Activated T-helper 2 cell treated with anti-CD3 and anti-CD28 coated beads, Interferon-gamma antibody, Interleukin-2, Interleukin-4, amounts not matched to agents 10 μg/mL and 5 μg/mL and 100 μg/mL, durations not matched to agents 14 hours and 24 hours and 36 hours (primary cell): ENCODE measurements at regions of chr6 and their contacts with region 1.

Region 1: DNA sequence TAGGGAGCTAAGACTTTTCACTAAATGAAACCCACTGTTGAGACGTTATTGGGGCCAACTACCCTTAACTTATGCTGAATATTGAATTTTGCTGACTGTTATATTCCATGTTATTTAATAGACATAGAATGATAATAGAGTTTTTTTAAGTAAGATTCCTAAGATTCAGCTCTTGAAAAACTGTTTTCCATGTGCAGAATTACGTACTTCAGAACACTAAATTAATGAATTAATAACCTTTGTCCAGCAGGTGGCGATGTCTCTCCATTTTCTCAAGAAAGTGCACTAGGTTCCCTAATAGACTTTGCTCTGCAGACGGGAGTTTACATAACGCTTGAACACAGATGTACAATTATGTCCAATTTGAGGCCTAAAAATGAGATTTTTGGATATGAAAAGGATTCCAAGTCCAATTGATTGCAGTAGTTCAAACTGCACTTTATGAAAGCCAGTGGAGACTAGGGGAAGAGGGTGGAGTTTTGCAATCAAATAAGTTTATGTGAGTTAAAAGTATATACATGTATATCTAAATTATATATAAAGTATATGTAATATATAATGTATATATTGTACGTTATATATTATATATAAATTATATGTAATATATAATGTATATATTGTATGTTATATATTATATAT is 282.1 kb downstream of the UST start:
- DNase-seq: peak; percentile 55
- H3K4me3 Mint-ChIP-seq: no peak overlapping the region
- H3K27ac Mint-ChIP-seq: peak overlapping the region; percentile 75
- H3K4me1 Mint-ChIP-seq: peaks cover 44% of the 10 kb centered on the region
- H3K27me3 Mint-ChIP-seq: no peaks in the 10 kb centered on the region

Region 2: GRCh38 chr6:148999929-149000468 is 28.9 kb before region 1 on chr6:
- intact Hi-C with region 1: no loop called
- DNase-seq: no peak
- H3K4me3 Mint-ChIP-seq: peak overlapping the region; percentile 7
- H3K27ac Mint-ChIP-seq: peak overlapping the region; percentile 6
- H3K4me1 Mint-ChIP-seq: peaks cover 14% of the 10 kb centered on the region
- H3K27me3 Mint-ChIP-seq: peaks cover 9% of the 10 kb centered on the region

Region 3: DNA sequence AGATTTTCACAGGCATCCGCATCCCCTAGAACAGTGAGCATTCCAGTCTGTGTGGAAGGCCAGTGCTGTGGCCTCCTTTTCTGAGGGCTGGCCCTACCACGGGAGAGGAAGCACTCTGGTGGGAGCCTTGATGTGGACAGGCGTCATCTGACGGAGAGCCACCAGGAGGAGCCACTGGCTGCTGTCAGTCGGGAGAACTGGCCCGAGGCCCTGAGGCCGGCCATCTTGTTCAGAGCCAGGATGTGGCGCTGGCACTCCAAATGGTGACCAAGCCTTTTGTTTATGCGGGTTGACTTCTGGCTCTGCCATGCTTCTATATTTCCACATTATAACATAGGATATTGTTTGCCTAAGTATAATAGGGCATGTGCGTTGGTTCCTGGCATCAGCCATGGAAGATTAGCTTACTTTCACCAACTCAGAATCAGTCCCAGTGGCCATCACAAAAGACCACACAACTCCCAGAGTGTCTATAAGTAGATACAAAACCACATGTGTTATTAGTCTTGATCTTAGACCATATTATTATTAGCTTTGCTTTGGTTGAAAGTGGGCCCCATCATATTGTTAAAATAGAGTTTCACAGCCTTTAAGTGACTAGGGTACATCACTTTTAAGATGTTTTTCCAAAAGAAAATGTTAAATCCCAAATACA is 14.7 kb after region 1 on chr6:
- intact Hi-C with region 1: no loop called
- DNase-seq: no peak
- H3K4me3 Mint-ChIP-seq: no peak overlapping the region
- H3K27ac Mint-ChIP-seq: no peak overlapping the region
- H3K4me1 Mint-ChIP-seq: peaks cover 48% of the 10 kb centered on the region
- H3K27me3 Mint-ChIP-seq: no peaks in the 10 kb centered on the region

Region 4: DNA sequence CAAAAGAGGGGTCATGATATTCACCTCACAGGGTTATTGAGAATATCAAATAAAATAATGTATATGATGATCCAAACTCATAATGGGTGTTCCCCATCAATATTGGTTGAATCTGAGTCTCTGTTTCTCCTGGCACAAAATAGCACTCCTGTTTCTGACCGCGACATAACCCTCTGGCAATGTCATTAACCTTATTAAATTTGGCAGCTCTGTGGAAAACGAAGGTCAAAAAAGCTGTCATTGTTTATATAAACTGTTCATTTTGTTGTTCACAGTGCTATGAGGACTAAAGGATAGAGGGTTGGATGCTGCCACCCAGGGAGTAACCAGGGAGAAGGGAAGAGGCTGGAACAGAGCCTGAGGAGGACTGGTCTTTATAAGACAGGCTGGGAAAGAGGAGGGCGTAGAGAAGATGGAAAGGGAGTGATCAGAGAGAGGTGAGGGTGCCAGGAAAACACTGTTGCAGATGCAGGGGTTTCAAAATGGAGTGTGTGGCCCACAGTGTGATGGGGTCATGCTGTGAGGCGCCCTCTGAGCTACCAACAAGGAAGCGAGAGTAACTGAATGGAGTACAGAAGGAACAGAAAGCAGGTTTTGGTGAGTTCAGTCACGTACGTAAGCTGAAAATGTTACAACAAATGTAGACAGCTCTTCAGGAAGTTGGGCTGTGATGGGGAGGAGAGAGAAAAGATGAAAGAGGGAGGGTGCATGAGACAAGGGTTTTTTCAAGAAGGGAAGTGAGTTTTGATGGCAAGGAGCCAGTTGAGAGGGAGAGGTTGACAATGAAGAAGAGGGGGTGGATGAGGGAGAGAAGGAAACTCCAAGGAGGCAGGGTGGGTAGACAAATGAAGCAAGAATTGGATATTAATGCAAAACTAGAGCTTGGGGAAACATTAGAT is 37.0 kb after region 1 on chr6:
- intact Hi-C with region 1: loop called (anchors 1 kb)
- DNase-seq: peak; percentile 34
- H3K4me3 Mint-ChIP-seq: peak overlapping the region; percentile 22
- H3K27ac Mint-ChIP-seq: peak overlapping the region; percentile 94
- H3K4me1 Mint-ChIP-seq: peaks cover 53% of the 10 kb centered on the region
- H3K27me3 Mint-ChIP-seq: no peaks in the 10 kb centered on the region

Region 5: DNA sequence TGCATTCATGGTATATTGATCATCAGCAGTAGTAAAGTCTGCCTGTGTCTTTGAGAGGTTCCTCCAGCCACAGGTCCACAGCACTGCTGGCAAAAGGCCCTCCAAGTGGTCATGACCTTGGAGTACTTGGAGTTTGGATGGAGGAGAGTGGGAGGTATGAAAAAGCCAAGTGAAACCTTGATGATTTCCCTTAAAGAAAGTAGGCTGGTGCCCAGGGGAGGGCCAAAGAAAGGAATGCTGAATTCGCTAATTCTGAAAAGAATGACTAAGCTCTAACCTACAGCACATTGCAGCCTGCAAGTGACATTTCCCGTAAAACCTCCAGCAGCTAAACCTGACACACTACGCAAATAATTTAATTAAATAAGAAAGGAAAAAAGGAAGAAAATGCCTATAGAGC is 65.3 kb after region 1 on chr6:
- intact Hi-C with region 1: loop called (anchors 1 kb)
- DNase-seq: no peak
- H3K4me3 Mint-ChIP-seq: peak overlapping the region; percentile 50
- H3K27ac Mint-ChIP-seq: peak overlapping the region; percentile 84
- H3K4me1 Mint-ChIP-seq: peaks cover 63% of the 10 kb centered on the region
- H3K27me3 Mint-ChIP-seq: no peaks in the 10 kb centered on the region

Region 6: GRCh38 chr6:149235130-149235561 is 206.3 kb after region 1 on chr6:
- intact Hi-C with region 1: loop called (anchors 1 kb)
- DNase-seq: no peak
- H3K4me3 Mint-ChIP-seq: no peak overlapping the region
- H3K27ac Mint-ChIP-seq: peak overlapping the region; percentile 99
- H3K4me1 Mint-ChIP-seq: peaks cover 60% of the 10 kb centered on the region
- H3K27me3 Mint-ChIP-seq: no peaks in the 10 kb centered on the region

Region 7: GRCh38 chr6:149431905-149432775 is 403.3 kb after region 1 on chr6:
- intact Hi-C with region 1: loop called (anchors 1 kb)
- DNase-seq: peak; percentile 78
- H3K4me3 Mint-ChIP-seq: no peak overlapping the region
- H3K27ac Mint-ChIP-seq: peak overlapping the region; percentile 64
- H3K4me1 Mint-ChIP-seq: peaks cover 14% of the 10 kb centered on the region
- H3K27me3 Mint-ChIP-seq: no peaks in the 10 kb centered on the region

Region 8: GRCh38 chr6:149513915-149514314 is 485.0 kb after region 1 on chr6:
- intact Hi-C with region 1: loop called (anchors 1 kb)
- DNase-seq: no peak
- H3K4me3 Mint-ChIP-seq: no peak overlapping the region
- H3K27ac Mint-ChIP-seq: no peak overlapping the region
- H3K4me1 Mint-ChIP-seq: peaks cover 39% of the 10 kb centered on the region
- H3K27me3 Mint-ChIP-seq: no peaks in the 10 kb centered on the region